GM12878 (cell line): ENCODE measurements at regions of chr11 and their contacts with region 1.

Region 1: GRCh38 chr11:62315431-62315830 is 16.6 kb upstream of the SCGB1D4 start:
- DNase-seq: no peak
- ATAC-seq: no peak
- H3K4me3 ChIP-seq: no peak overlapping the region
- H3K27ac ChIP-seq: no peak overlapping the region
- H3K4me1 ChIP-seq: no peaks in the 10 kb centered on the region
- H3K27me3 ChIP-seq: peaks cover 0 to 2% of the 10 kb centered on the region in 2 experiments; a peak in 3 of 4 replicates
- CTCF ChIP-seq: no peak
- EP300 ChIP-seq: no peak
- POLR2A ChIP-seq: no peak
- RAD21 ChIP-seq: no peak

Region 2: GRCh38 chr11:62088331-62088933 is 227.0 kb before region 1 on chr11:
- CTCF ChIA-PET with region 1: no interaction called
- POLR2A ChIA-PET with region 1: no interaction called
- RAD21 ChIA-PET with region 1: no interaction called
- SMC1A ChIA-PET with region 1: no interaction called
- in situ Hi-C with region 1: no loop called
- intact Hi-C with region 1: no loop called
- DNase-seq: no peak
- ATAC-seq: no peak
- H3K4me3 ChIP-seq: no peak overlapping the region
- H3K27ac ChIP-seq: no peak overlapping the region
- H3K4me1 ChIP-seq: no peaks in the 10 kb centered on the region
- H3K27me3 ChIP-seq: no peaks in the 10 kb centered on the region
- CTCF ChIP-seq: no peak
- EP300 ChIP-seq: no peak
- POLR2A ChIP-seq: no peak
- RAD21 ChIP-seq: no peak

Region 3: GRCh38 chr11:62169091-62169847 is 146.2 kb before region 1 on chr11:
- CTCF ChIA-PET with region 1: interaction called, 12 read pairs
- POLR2A ChIA-PET with region 1: no interaction called
- RAD21 ChIA-PET with region 1: interaction called, 6 read pairs
- SMC1A ChIA-PET with region 1: interaction called, 5 read pairs
- in situ Hi-C with region 1: loop called (anchors 5 kb)
- intact Hi-C with region 1: loop called (anchors 1 kb)
- DNase-seq: no peak
- ATAC-seq: no peak
- H3K4me3 ChIP-seq: no peak overlapping the region
- H3K27ac ChIP-seq: no peak overlapping the region
- H3K4me1 ChIP-seq: no peaks in the 10 kb centered on the region
- H3K27me3 ChIP-seq: peaks cover 0 to 2% of the 10 kb centered on the region in 2 experiments; a peak in 1 of 4 replicates
- CTCF ChIP-seq: no peak
- EP300 ChIP-seq: no peak
- POLR2A ChIP-seq: no peak
- RAD21 ChIP-seq: no peak

Region 4: GRCh38 chr11:62245271-62245753 is 70.1 kb before region 1 on chr11:
- CTCF ChIA-PET with region 1: interaction called, 4 read pairs
- POLR2A ChIA-PET with region 1: no interaction called
- RAD21 ChIA-PET with region 1: interaction called, 11 read pairs
- SMC1A ChIA-PET with region 1: interaction called, 4 read pairs
- in situ Hi-C with region 1: no loop called
- intact Hi-C with region 1: loop called (anchors 1 kb)
- DNase-seq: no peak
- ATAC-seq: peak; percentile 82
- H3K4me3 ChIP-seq: no peak overlapping the region
- H3K27ac ChIP-seq: no peak overlapping the region
- H3K4me1 ChIP-seq: no peaks in the 10 kb centered on the region
- H3K27me3 ChIP-seq: no peaks in the 10 kb centered on the region; a peak in 2 of 4 replicates
- CTCF ChIP-seq: peak; percentile 38 to 42 (median 38); a peak in 5 of 6 replicates
- EP300 ChIP-seq: no peak
- POLR2A ChIP-seq: no peak
- RAD21 ChIP-seq: peak; percentile 44; the same call in 1 of the 2 replicates

Region 5: GRCh38 chr11:62256281-62256680 is 59.1 kb before region 1 on chr11:
- CTCF ChIA-PET with region 1: no interaction called
- POLR2A ChIA-PET with region 1: no interaction called
- RAD21 ChIA-PET with region 1: no interaction called
- SMC1A ChIA-PET with region 1: no interaction called
- in situ Hi-C with region 1: no loop called
- intact Hi-C with region 1: no loop called
- DNase-seq: no peak
- ATAC-seq: no peak
- H3K4me3 ChIP-seq: no peak overlapping the region
- H3K27ac ChIP-seq: no peak overlapping the region
- H3K4me1 ChIP-seq: no peaks in the 10 kb centered on the region
- H3K27me3 ChIP-seq: no peaks in the 10 kb centered on the region
- CTCF ChIP-seq: no peak
- EP300 ChIP-seq: no peak
- POLR2A ChIP-seq: no peak
- RAD21 ChIP-seq: no peak

Region 6: GRCh38 chr11:62487738-62488551 is 172.5 kb after region 1 on chr11:
- CTCF ChIA-PET with region 1: no interaction called
- POLR2A ChIA-PET with region 1: no interaction called
- RAD21 ChIA-PET with region 1: no interaction called
- SMC1A ChIA-PET with region 1: no interaction called
- in situ Hi-C with region 1: no loop called
- intact Hi-C with region 1: no loop called
- DNase-seq: no peak
- ATAC-seq: no peak
- H3K4me3 ChIP-seq: no peak overlapping the region
- H3K27ac ChIP-seq: no peak overlapping the region
- H3K4me1 ChIP-seq: no peaks in the 10 kb centered on the region
- H3K27me3 ChIP-seq: peaks cover 0 to 2% of the 10 kb centered on the region in 2 experiments; a peak in 1 of 4 replicates
- CTCF ChIP-seq: no peak
- EP300 ChIP-seq: no peak
- POLR2A ChIP-seq: no peak
- RAD21 ChIP-seq: no peak

Region 7: DNA sequence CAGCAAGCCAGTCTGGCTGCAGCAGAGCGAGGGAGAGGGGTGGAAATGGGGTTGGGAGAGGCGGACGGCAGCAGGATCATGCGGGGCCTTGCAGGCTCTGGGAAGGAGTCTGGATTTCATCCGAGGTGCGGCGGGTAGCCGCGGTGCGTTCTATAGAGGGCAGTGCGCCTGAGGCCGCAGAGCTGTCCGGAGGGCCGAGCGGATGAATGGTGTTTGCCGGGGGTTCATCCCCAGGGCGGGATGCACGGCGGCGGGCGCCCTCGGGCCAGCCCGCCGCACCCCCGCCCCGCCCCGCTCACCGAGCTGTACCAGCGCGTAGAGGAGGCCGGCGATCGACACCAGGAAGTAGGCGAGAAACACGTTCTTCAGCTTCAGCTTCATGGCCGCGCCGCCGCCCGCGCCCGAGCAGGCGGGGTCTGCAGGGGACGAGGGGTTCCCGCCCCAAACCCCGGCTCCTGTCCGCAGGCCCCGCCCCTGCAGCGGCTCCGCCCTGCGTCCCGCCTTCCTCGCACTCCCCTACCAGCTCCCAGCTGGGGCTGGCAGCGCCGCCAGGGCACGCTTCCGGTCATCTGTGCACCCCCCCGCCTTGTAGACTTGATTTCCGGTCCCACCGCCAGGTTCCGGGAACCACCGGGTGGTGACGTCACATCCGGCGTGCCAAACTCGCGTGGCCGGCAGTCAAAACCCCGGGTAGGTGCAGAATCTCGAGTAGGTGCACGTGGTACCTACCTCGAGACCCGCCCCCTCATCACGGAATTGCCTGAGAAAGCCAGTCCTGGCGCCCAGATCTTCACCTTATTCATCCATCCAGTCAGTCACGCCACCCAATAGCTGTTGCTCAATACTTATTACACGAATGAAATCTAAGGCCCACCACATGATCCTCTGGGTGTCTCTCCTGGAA is 306.4 kb after region 1 on chr11 and contains the start of gene B3GAT3:
- CTCF ChIA-PET with region 1: no interaction called
- POLR2A ChIA-PET with region 1: no interaction called
- RAD21 ChIA-PET with region 1: no interaction called
- SMC1A ChIA-PET with region 1: no interaction called
- in situ Hi-C with region 1: no loop called
- intact Hi-C with region 1: no loop called
- DNase-seq: peak; percentile 98
- ATAC-seq: peak; percentile 98
- H3K4me3 ChIP-seq: peak within 1 kb of the TSS; percentile 84
- H3K27ac ChIP-seq: peak within 1 kb of the TSS; percentile 81
- H3K4me1 ChIP-seq: 0 out of 2 replicates have a peak, but pooled peaks cover 4% of the 10 kb centered on the region
- H3K27me3 ChIP-seq: no peaks in the 10 kb centered on the region
- CTCF ChIP-seq: no peak
- EP300 ChIP-seq: peak in 1 of 2 experiments; percentile 27; a peak in 1 of 4 replicates
- POLR2A ChIP-seq: peak; percentile 84
- RAD21 ChIP-seq: no peak
- polyA plus RNA-seq, gene B3GAT3: 0.31 to 2.8 TPM